ENCODE measurements at regions of chr22 and their contacts with region 1.

Region 1: GRCh38 chr22:23178512-23179254 is 1.6 kb upstream of the BCR start:
- DNase-seq: peak; percentile 67 to 72
- H3K4me3 ChIP-seq: no peak overlapping the region
- H3K27ac ChIP-seq: peak overlapping the region in 1 of 3 donors; percentile 61
- H3K4me1 ChIP-seq: peaks cover 35 to 36% of the 10 kb centered on the region in 2 donors
- H3K27me3 ChIP-seq: no peaks in the 10 kb centered on the region
- CTCF ChIP-seq: peak; percentile 89 to 97 (median 94)
- POLR2A ChIP-seq: no peak

Region 2: GRCh38 chr22:23113067-23113846 is 65.4 kb before region 1 on chr22:
- intact Hi-C with region 1: no loop called
- DNase-seq: no peak
- H3K4me3 ChIP-seq: no peak overlapping the region
- H3K27ac ChIP-seq: no peak overlapping the region
- H3K4me1 ChIP-seq: no peaks in the 10 kb centered on the region
- H3K27me3 ChIP-seq: no peaks in the 10 kb centered on the region
- CTCF ChIP-seq: no peak
- POLR2A ChIP-seq: no peak

Region 3: GRCh38 chr22:23219822-23220484 is 41.3 kb after region 1 on chr22:
- intact Hi-C with region 1: loop called (anchors 5 kb)
- DNase-seq: peak; percentile 89 to 90
- H3K4me3 ChIP-seq: no peak overlapping the region
- H3K27ac ChIP-seq: peak overlapping the region; percentile 69 to 86 (median 73)
- H3K4me1 ChIP-seq: peaks cover 73 to 100% of the 10 kb centered on the region in 2 donors
- H3K27me3 ChIP-seq: no peaks in the 10 kb centered on the region
- CTCF ChIP-seq: no peak
- POLR2A ChIP-seq: peak in 1 of 2 donors; percentile 29

Region 4: GRCh38 chr22:23281406-23282088 is 102.9 kb after region 1 on chr22:
- intact Hi-C with region 1: loop called (anchors 2 kb)
- DNase-seq: peak; percentile 84 to 85
- H3K4me3 ChIP-seq: no peak overlapping the region
- H3K27ac ChIP-seq: peak overlapping the region in 1 of 3 donors; percentile 84
- H3K4me1 ChIP-seq: peaks cover 20 to 58% of the 10 kb centered on the region in 2 donors
- H3K27me3 ChIP-seq: no peaks in the 10 kb centered on the region
- CTCF ChIP-seq: peak; percentile 72 to 96 (median 92)
- POLR2A ChIP-seq: no peak

Region 5: DNA sequence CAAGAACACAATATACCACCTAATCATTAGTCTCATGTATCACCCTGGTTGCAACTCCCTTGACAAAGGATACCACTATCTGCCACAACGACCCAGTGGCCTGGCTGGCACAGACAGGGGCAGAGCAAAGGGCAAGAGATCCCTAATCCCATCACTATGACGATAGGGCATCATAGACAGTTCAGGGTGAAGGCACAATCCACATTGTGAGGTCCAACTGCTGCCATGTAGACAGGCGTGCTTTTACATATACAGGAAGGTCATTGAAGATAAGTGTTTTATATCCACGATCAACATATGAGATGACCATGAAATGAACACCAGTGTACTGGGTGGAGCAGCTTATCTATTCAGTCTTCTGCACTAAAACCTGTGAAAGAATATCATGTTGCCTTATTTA is 306.8 kb after region 1 on chr22:
- intact Hi-C with region 1: no loop called
- DNase-seq: no peak
- H3K4me3 ChIP-seq: no peak overlapping the region
- H3K27ac ChIP-seq: no peak overlapping the region
- H3K4me1 ChIP-seq: no peaks in the 10 kb centered on the region
- H3K27me3 ChIP-seq: no peaks in the 10 kb centered on the region
- CTCF ChIP-seq: no peak
- POLR2A ChIP-seq: no peak

Measured in thyroid gland (tissue), 4 donors.